Spleen (tissue), 13 donors: ENCODE measurements at regions of chr3 and their contacts with region 1.

Region 1: GRCh38 chr3:14452679-14453367 is 50.4 kb downstream of the SLC6A6 start:
- DNase-seq: peak; percentile 84
- H3K4me3 ChIP-seq: no peak overlapping the region
- H3K27ac ChIP-seq: peak overlapping the region; percentile 15 to 82 (median 71)
- H3K4me1 ChIP-seq: peaks cover 11 to 55% (median 40%) of the 10 kb centered on the region in 6 donors
- H3K27me3 ChIP-seq: no peaks in the 10 kb centered on the region
- CTCF ChIP-seq: peak in 2 of 11 experiments; percentile 15
- POLR2A ChIP-seq: no peak

Region 2: GRCh38 chr3:14402304-14402811 is 50.5 kb before region 1 on chr3 and contains the start of gene SLC6A6:
- intact Hi-C with region 1: loop called (anchors 10 kb)
- DNase-seq: peak; percentile 99
- H3K4me3 ChIP-seq: peak within 1 kb of the TSS; percentile 72 to 92 (median 84)
- H3K27ac ChIP-seq: peak within 1 kb of the TSS; percentile 93 to 100 (median 98)
- H3K4me1 ChIP-seq: peaks cover 30 to 90% (median 63%) of the 10 kb centered on the region in 6 donors
- H3K27me3 ChIP-seq: no peaks in the 10 kb centered on the region
- CTCF ChIP-seq: peak in 10 of 11 experiments; percentile 27 to 77 (median 70)
- POLR2A ChIP-seq: peak in 2 of 3 donors; percentile 21 to 89
- total RNA-seq, gene SLC6A6: 75.4 to 150 (median 128) TPM